CD4-positive, alpha-beta memory T cell (primary cell): ENCODE measurements at regions of chr1 and their contacts with region 1.

Region 1: DNA sequence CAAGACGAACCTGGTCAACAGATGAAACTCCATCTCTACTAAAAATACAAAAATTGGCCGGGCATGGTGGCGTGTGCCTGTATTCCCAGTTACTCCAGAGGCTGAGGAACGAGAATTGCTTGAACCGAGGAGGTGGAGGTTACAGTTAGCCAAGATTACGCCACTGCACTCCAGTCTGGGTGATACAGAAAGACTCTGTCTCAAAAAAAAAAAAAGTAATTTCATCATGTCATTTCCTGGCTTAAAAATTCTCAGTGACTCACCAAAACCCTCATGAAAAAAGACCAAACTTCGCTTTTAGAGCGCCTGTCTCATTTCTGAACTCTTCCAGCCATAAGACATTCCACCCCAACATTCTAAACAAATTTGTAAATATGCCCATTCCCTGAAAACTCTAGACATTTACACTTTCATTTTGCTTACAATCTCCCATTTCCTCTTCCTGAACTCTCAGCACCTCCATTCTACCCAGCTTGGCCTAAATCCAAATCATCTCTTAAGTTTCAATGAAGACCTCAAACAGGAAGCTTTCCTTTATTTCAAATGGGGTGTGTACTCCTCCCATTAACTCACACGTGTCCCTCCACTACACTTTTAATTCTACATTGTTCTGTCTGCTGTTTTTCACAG is 50.5 kb upstream of the PRRC2C start:
- DNase-seq: peak in 4 of 5 donors; percentile 4 to 25 (median 18)
- H3K4me3 ChIP-seq: no peak overlapping the region
- H3K4me3 Mint-ChIP-seq: peak overlapping the region; percentile 40 to 84 (median 66)
- H3K27ac ChIP-seq: no peak overlapping the region
- H3K27ac Mint-ChIP-seq: peak overlapping the region; percentile 78 to 94 (median 85)
- H3K4me1 ChIP-seq: peaks cover 10% of the 10 kb centered on the region
- H3K4me1 Mint-ChIP-seq: peaks cover 9 to 22% (median 15%) of the 10 kb centered on the region in 4 donors
- H3K27me3 ChIP-seq: no peaks in the 10 kb centered on the region
- H3K27me3 Mint-ChIP-seq: peaks cover 2 to 11% of the 10 kb centered on the region in 2 donors

Region 2: GRCh38 chr1:171422511-171422910 is 12.3 kb before region 1 on chr1:
- CTCF ChIA-PET with region 1: no interaction called
- POLR2A ChIA-PET with region 1: interaction called, 6 read pairs
- intact Hi-C with region 1: loop called (anchors 2 kb)
- DNase-seq: no peak
- H3K4me3 ChIP-seq: no peak overlapping the region
- H3K4me3 Mint-ChIP-seq: no peak overlapping the region
- H3K27ac ChIP-seq: no peak overlapping the region
- H3K27ac Mint-ChIP-seq: peak overlapping the region in 4 of 7 donors; percentile 7 to 73 (median 38)
- H3K4me1 ChIP-seq: peaks cover 32% of the 10 kb centered on the region
- H3K4me1 Mint-ChIP-seq: peaks cover 21 to 38% (median 28%) of the 10 kb centered on the region in 4 donors
- H3K27me3 ChIP-seq: no peaks in the 10 kb centered on the region
- H3K27me3 Mint-ChIP-seq: no peaks in the 10 kb centered on the region

Region 3: DNA sequence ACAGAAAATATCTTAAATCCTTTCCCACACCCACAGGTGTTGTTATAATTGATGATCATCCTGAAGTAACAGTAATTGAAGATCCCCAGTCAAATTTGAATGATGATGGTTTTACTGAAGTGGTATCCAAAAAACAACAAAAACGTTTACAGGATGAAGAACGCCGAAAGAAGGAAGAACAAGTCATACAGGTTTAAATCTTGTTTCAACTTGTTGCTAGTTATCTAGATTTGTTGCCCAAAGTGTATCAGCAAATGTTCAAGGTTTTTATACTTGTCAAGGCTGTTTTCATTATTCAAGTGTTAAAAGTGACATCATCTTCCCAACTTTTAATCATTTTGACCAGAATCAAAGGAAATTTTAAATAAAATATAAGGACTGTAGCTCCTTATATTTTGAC is 115.2 kb after region 1 on chr1:
- CTCF ChIA-PET with region 1: no interaction called
- POLR2A ChIA-PET with region 1: no interaction called
- intact Hi-C with region 1: no loop called
- DNase-seq: no peak
- H3K4me3 ChIP-seq: no peak overlapping the region
- H3K4me3 Mint-ChIP-seq: no peak overlapping the region
- H3K27ac ChIP-seq: no peak overlapping the region
- H3K27ac Mint-ChIP-seq: peak overlapping the region in 1 of 7 donors; percentile 46
- H3K4me1 ChIP-seq: no peaks in the 10 kb centered on the region
- H3K4me1 Mint-ChIP-seq: peaks cover 15 to 30% (median 23%) of the 10 kb centered on the region in 4 donors
- H3K27me3 ChIP-seq: no peaks in the 10 kb centered on the region
- H3K27me3 Mint-ChIP-seq: no peaks in the 10 kb centered on the region